ENCODE measurements at regions of chr5 and their contacts with region 1.

Region 1: GRCh38 chr5:148826053-148826738 is at the start of gene ADRB2:
- DNase-seq: peak; percentile 96 to 98 (median 97)
- ATAC-seq: peak; percentile 97 to 98 (median 98)
- H3K4me3 ChIP-seq: peak within 1 kb of the TSS; percentile 55 to 84 (median 62)
- H3K27ac ChIP-seq: peak within 1 kb of the TSS; percentile 79 to 96 (median 90)
- H3K4me1 ChIP-seq: peaks cover 0 to 60% (median 16%) of the 10 kb centered on the region in 12 donors
- H3K27me3 ChIP-seq: no peaks in the 10 kb centered on the region
- CTCF ChIP-seq: peak in 2 of 12 donors; percentile 3 to 19
- POLR2A ChIP-seq: peak; percentile 90 to 99
- total RNA-seq, gene ADRB2: 3.4 to 8.3 (median 6.2) TPM

Region 2: GRCh38 chr5:148730943-148731861 is 95.0 kb before region 1 on chr5:
- intact Hi-C with region 1: no loop called
- DNase-seq: peak; percentile 65 to 81 (median 76)
- ATAC-seq: peak; percentile 67 to 90 (median 86)
- H3K4me3 ChIP-seq: peak overlapping the region in 5 of 12 donors; percentile 7 to 28 (median 8)
- H3K27ac ChIP-seq: no peak overlapping the region
- H3K4me1 ChIP-seq: peaks cover 0 to 11% (median 2%) of the 10 kb centered on the region in 12 donors
- H3K27me3 ChIP-seq: no peaks in the 10 kb centered on the region
- CTCF ChIP-seq: peak; percentile 85 to 99 (median 92)
- POLR2A ChIP-seq: no peak

Region 3: GRCh38 chr5:148805326-148806290 is 20.6 kb before region 1 on chr5:
- intact Hi-C with region 1: loop called in 1 of 10 experiments (anchors 1 kb)
- DNase-seq: peak in 4 of 5 donors; percentile 44 to 81 (median 62)
- ATAC-seq: peak; percentile 94 to 97 (median 96)
- H3K4me3 ChIP-seq: no peak overlapping the region
- H3K27ac ChIP-seq: peak overlapping the region; percentile 32 to 83 (median 68)
- H3K4me1 ChIP-seq: peaks cover 0 to 66% (median 20%) of the 10 kb centered on the region in 12 donors
- H3K27me3 ChIP-seq: no peaks in the 10 kb centered on the region
- CTCF ChIP-seq: no peak
- POLR2A ChIP-seq: peak in 1 of 2 donors; percentile 23

Region 4: DNA sequence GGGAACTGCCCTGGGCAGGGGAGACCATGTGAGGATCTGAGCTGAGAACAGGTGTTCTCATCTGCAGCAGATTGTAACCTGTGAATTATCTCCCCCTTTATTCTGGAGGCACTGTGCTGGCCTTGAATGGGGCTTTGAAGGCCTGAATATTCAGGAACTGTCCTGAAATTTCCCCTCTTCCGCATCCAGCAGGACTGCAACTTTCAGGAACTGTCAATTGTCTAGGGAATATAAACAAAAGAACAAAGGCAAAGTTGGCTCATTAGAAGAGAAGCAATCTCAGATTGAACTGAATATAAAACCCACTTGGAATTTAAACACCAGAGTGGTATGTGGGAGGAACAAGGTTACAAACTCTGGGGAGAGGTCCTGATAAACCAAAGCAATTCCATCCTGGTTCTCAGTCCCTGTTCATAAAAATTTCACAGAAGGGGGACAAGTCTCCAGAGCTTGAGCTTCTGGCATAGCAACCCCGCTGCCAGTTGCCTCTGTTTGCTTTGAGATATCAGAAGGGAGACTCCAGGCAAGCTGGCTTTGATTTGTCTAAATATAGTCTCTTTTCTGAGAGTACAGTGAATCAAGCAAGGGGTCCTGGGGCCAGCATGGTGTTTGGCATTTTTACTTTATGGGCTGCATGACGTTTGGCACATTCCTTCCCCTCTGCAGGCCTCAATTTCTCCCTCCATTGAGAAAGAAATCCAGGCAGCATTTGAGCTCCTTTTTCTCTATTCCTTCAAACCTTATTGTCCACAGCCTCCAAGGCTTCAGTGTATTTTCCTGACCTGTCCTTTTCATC is 47.7 kb after region 1 on chr5:
- intact Hi-C with region 1: loop called in 3 of 10 experiments (anchors 5 kb)
- DNase-seq: no peak
- ATAC-seq: peak in 2 of 4 donors; percentile 22 to 57
- H3K4me3 ChIP-seq: no peak overlapping the region
- H3K27ac ChIP-seq: peak overlapping the region in 9 of 12 donors; percentile 4 to 71 (median 38)
- H3K4me1 ChIP-seq: peaks cover 16 to 43% (median 26%) of the 10 kb centered on the region in 12 donors
- H3K27me3 ChIP-seq: no peaks in the 10 kb centered on the region
- CTCF ChIP-seq: no peak
- POLR2A ChIP-seq: no peak

Region 5: DNA sequence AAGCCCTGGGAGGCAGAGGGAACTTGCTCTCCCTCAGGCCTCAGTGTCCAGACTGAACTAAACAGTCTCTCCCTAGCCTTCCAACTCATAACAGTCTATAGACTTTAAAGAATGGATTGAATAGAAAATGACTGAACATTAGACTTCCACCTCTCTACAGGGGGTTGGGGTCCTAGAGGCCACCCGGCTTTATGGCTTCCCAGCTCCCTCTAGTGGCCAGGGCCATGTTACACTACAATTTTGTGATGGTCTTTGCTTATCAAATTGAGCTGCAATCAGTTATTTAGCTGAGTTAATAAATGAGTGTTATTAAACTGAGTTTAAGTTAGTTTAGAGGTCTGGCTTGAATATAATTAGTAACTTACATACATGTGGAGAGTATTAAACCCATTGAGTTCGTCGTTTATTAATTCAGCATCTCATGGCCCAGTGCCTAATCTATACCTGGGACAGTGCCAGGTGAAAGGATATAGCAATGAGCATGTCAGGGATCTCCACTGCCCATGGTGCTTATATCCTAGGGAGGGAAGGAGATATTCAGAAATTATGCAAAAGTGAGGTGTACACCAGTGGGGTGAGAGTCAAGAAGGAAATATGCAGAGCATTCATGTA is 131.5 kb after region 1 on chr5:
- intact Hi-C with region 1: loop called in 8 of 10 experiments (anchors 2 to 10 kb)
- DNase-seq: peak in 3 of 5 donors; percentile 20 to 47 (median 29)
- ATAC-seq: peak in 2 of 4 donors; percentile 43 to 53
- H3K4me3 ChIP-seq: no peak overlapping the region
- H3K27ac ChIP-seq: no peak overlapping the region
- H3K4me1 ChIP-seq: peaks cover 0 to 12% (median 0%) of the 10 kb centered on the region in 12 donors
- H3K27me3 ChIP-seq: no peaks in the 10 kb centered on the region
- CTCF ChIP-seq: peak; percentile 69 to 88 (median 80)
- POLR2A ChIP-seq: no peak

Region 6: DNA sequence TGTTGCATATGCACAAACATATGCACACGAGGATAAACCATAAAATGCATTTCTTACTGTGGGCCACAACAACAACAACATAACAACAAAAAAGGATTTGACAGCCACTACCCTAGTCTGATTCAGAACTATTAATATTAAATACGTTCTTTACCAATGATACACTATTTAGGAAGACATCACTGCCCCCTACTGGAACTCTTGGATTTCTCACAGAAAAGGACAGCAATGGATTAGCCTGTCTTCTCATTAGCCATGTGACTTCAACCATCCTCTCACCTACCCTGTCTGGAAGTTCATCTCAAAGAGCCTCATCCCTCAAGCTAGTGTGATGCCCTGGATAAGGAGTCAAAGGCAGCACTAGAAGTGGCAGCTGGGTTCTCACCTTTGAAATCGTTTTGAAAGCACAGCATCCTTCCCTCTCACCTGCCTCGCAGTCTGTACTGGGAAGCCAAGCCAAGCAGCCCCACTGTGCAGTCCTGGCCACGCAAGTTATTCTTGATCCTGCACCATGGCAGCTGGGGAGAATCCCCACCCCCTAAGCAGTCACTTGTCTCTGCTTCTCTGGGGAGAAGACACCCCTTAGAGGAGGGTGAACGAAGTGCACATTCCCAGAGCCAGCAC is 172.1 kb after region 1 on chr5:
- intact Hi-C with region 1: loop called in 3 of 10 experiments (anchors 2 to 5 kb)
- DNase-seq: peak in 1 of 5 donors; percentile 28
- ATAC-seq: peak in 3 of 4 donors; percentile 47 to 69 (median 69)
- H3K4me3 ChIP-seq: no peak overlapping the region
- H3K27ac ChIP-seq: no peak overlapping the region
- H3K4me1 ChIP-seq: peaks cover 0 to 28% (median 6%) of the 10 kb centered on the region in 12 donors
- H3K27me3 ChIP-seq: no peaks in the 10 kb centered on the region
- CTCF ChIP-seq: peak; percentile 57 to 77 (median 68)
- POLR2A ChIP-seq: no peak

Region 7: GRCh38 chr5:149114403-149115312 is 288.5 kb after region 1 on chr5:
- intact Hi-C with region 1: loop called in 4 of 10 experiments (anchors 5 to 10 kb)
- DNase-seq: peak; percentile 49 to 73 (median 55)
- ATAC-seq: peak; percentile 85 to 97 (median 95)
- H3K4me3 ChIP-seq: no peak overlapping the region
- H3K27ac ChIP-seq: peak overlapping the region in 7 of 12 donors; percentile 2 to 62 (median 38)
- H3K4me1 ChIP-seq: peaks cover 0 to 10% (median 4%) of the 10 kb centered on the region in 12 donors
- H3K27me3 ChIP-seq: no peaks in the 10 kb centered on the region
- CTCF ChIP-seq: peak; percentile 49 to 85 (median 75)
- POLR2A ChIP-seq: no peak

Measured in heart left ventricle (tissue), 16 donors.